GM10248 (cell line): ENCODE measurements at regions of chr16 and their contacts with region 1.

Region 1: GRCh38 chr16:22360963-22361659 is 13.3 kb downstream of the CDR2 start:
- DNase-seq: no peak
- CTCF ChIP-seq: no peak

Region 2: DNA sequence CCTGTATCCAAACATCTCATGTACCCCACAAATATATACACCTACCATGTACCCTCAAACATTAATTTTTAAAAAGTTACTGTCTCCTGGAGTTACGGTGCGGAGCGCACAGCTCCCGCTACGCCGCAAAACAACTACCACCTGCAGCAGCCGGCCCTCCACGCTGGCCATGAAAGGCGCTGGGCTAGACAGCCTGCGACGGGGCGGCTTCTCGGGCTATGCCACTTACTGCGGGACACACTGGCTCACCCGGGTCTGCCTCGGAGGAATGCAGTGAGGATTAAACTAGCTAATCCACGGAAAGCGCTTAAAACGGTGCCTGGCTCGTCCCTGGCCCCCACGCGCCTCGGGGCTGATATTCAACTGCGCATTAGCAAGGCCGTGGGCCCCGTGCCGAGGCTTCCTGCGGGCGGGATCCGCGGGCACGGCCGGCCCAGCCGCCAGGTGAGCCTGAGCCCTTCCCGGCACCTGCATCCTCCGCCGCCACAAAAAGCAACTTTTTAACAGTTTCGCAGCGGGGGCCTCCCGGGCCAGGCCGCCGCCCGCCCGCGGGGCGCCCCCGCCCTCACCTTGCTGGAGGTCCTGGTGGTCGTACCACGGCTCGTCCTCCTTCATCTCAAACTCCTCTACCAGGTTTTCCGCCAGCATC is 12.7 kb after region 1 on chr16:
- CTCF ChIA-PET with region 1: interaction called, 3 read pairs
- POLR2A ChIA-PET with region 1: interaction called, 16 read pairs
- DNase-seq: peak; percentile 35
- CTCF ChIP-seq: no peak

Region 3: DNA sequence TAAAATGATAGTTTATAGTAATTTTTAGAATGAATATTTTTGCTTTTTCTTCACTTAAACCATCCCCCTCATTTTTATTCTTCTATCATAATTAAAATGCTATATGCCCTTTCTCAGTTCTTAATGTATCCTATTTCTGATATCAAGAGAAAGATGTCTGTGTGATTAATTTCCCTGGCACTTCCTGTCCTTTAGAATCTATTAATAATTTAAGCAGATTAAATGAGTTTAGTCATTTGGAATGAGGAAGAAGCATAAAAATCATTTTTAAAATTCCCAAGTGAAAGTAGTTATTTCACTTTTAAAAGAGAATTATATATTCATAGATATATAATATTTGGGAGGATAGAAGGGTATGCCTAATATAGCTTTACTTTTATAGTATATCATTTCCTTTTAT is 41.1 kb after region 1 on chr16:
- CTCF ChIA-PET with region 1: no interaction called
- POLR2A ChIA-PET with region 1: no interaction called
- DNase-seq: no peak
- CTCF ChIP-seq: no peak